ENCODE measurements at regions of chr3 and their contacts with region 1.

Region 1: DNA sequence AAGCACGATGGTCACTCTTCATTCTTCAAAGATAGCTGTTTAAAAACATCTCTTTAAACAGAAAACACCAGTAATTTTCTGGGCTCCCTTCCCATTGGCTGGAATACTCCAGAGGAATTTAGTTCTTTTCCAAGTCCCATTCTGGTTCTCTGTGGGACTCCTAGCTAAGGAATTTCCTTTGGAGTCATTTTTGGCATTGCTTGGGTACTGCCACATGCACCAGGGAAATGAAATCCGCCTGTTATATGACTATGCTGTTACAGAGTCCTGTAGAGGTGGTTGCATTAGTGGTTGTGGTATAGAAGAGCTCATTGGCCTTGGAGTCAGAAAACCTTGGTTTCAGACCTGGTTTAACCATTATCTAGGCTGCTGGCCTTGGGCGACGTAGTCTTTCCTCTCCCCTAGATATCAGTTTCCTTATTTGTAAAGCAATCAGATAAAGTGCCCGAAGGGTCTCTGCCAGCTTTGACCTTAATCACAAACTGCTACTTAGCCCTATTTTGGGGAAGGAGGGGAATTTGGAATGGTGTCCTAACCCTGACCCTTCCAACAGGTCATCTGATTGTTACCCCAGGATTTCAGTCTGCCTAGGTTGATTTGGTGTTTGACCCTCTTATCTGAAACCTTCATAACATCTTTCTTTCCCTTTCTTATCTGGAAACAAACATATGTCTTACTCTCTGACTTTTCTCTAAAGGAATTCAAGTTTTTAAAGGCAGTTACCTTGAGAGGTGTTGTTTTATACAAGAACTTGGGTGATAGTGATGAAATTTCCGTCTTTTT is 13.4 kb downstream of the RTP1 start:
- DNase-seq: no peak
- H3K4me3 ChIP-seq: no peak overlapping the region
- H3K27ac ChIP-seq: no peak overlapping the region
- H3K4me1 ChIP-seq: no peaks in the 10 kb centered on the region
- H3K27me3 ChIP-seq: peaks cover 0 to 2% of the 10 kb centered on the region in 2 experiments
- CTCF ChIP-seq: no peak
- POLR2A ChIP-seq: no peak

Region 2: GRCh38 chr3:186013312-186013711 is 1197.4 kb before region 1 on chr3:
- CTCF ChIA-PET with region 1: no interaction called
- POLR2A ChIA-PET with region 1: no interaction called
- dilution Hi-C with region 1: no loop called
- intact Hi-C with region 1: loop called (anchors 5 kb)
- DNase-seq: no peak
- H3K4me3 ChIP-seq: no peak overlapping the region
- H3K27ac ChIP-seq: no peak overlapping the region
- H3K4me1 ChIP-seq: no peaks in the 10 kb centered on the region
- H3K27me3 ChIP-seq: no peaks in the 10 kb centered on the region
- CTCF ChIP-seq: no peak
- POLR2A ChIP-seq: no peak

Region 3: GRCh38 chr3:187112934-187113793 is 97.6 kb before region 1 on chr3:
- CTCF ChIA-PET with region 1: no interaction called
- POLR2A ChIA-PET with region 1: no interaction called
- dilution Hi-C with region 1: no loop called
- intact Hi-C with region 1: no loop called
- DNase-seq: peak; percentile 64
- H3K4me3 ChIP-seq: no peak overlapping the region
- H3K27ac ChIP-seq: no peak overlapping the region
- H3K4me1 ChIP-seq: no peaks in the 10 kb centered on the region
- H3K27me3 ChIP-seq: no peaks in the 10 kb centered on the region
- CTCF ChIP-seq: peak; percentile 30 to 39
- POLR2A ChIP-seq: no peak